Activated B cell treated with CpG ODN at 0.5 μM for 24 hours (primary cell): ENCODE measurements at regions of chr17 and their contacts with region 1.

Region 1: GRCh38 chr17:64025732-64026294 is 5.4 kb upstream of the ICAM2 start:
- DNase-seq: peak; percentile 72
- ATAC-seq: peak; percentile 92
- H3K4me3 Mint-ChIP-seq: peak overlapping the region; percentile 73
- H3K27ac Mint-ChIP-seq: peak overlapping the region; percentile 62
- H3K4me1 Mint-ChIP-seq: peaks cover 42% of the 10 kb centered on the region
- H3K27me3 Mint-ChIP-seq: no peaks in the 10 kb centered on the region
- CTCF ChIP-seq: peak; percentile 80

Region 2: GRCh38 chr17:63911657-63912426 is 114.0 kb before region 1 on chr17:
- CTCF ChIA-PET with region 1: interaction called, 102 read pairs
- POLR2A ChIA-PET with region 1: interaction called, 13 read pairs
- intact Hi-C with region 1: loop called (anchors 1 kb)
- DNase-seq: peak; percentile 59
- ATAC-seq: peak; percentile 57
- H3K4me3 Mint-ChIP-seq: no peak overlapping the region
- H3K27ac Mint-ChIP-seq: peak overlapping the region; percentile 35
- H3K4me1 Mint-ChIP-seq: peaks cover 52% of the 10 kb centered on the region
- H3K27me3 Mint-ChIP-seq: peaks cover 1% of the 10 kb centered on the region
- CTCF ChIP-seq: no peak

Region 3: DNA sequence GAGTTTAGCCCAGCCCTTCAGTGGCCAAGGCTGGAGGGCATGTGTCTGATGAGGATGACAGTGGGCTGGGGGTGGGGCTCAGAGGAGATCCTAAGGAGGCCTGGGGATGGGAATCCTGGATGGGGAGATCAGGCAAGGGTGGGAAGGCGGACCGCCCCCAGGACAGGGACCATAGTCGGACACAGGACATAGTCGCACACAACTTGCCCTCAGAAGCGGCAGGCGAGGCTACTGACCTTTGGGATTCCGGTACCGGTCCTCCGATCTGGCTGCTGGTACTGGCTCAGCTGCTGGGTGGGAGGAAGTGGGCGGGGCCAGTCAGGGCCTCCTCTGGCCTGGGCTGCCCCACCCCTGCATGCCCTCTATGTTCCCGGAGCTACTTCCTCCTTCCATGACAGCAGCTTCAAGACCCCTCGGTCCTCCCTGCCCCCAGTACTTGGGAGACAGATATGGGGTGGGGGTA is 94.7 kb before region 1 on chr17:
- CTCF ChIA-PET with region 1: interaction called, 11 read pairs
- POLR2A ChIA-PET with region 1: interaction called, 48 read pairs
- intact Hi-C with region 1: no loop called
- DNase-seq: peak; percentile 67
- ATAC-seq: peak; percentile 45
- H3K4me3 Mint-ChIP-seq: peak overlapping the region; percentile 98
- H3K27ac Mint-ChIP-seq: peak overlapping the region; percentile 96
- H3K4me1 Mint-ChIP-seq: peaks cover 89% of the 10 kb centered on the region
- H3K27me3 Mint-ChIP-seq: no peaks in the 10 kb centered on the region
- CTCF ChIP-seq: no peak

Region 4: GRCh38 chr17:63984651-63985386 is 41.0 kb before region 1 on chr17:
- CTCF ChIA-PET with region 1: interaction called, 21 read pairs
- POLR2A ChIA-PET with region 1: interaction called, 12 read pairs
- intact Hi-C with region 1: loop called (anchors 1 kb)
- DNase-seq: no peak
- ATAC-seq: peak; percentile 89
- H3K4me3 Mint-ChIP-seq: no peak overlapping the region
- H3K27ac Mint-ChIP-seq: no peak overlapping the region
- H3K4me1 Mint-ChIP-seq: peaks cover 16% of the 10 kb centered on the region
- H3K27me3 Mint-ChIP-seq: no peaks in the 10 kb centered on the region
- CTCF ChIP-seq: no peak

Region 5: DNA sequence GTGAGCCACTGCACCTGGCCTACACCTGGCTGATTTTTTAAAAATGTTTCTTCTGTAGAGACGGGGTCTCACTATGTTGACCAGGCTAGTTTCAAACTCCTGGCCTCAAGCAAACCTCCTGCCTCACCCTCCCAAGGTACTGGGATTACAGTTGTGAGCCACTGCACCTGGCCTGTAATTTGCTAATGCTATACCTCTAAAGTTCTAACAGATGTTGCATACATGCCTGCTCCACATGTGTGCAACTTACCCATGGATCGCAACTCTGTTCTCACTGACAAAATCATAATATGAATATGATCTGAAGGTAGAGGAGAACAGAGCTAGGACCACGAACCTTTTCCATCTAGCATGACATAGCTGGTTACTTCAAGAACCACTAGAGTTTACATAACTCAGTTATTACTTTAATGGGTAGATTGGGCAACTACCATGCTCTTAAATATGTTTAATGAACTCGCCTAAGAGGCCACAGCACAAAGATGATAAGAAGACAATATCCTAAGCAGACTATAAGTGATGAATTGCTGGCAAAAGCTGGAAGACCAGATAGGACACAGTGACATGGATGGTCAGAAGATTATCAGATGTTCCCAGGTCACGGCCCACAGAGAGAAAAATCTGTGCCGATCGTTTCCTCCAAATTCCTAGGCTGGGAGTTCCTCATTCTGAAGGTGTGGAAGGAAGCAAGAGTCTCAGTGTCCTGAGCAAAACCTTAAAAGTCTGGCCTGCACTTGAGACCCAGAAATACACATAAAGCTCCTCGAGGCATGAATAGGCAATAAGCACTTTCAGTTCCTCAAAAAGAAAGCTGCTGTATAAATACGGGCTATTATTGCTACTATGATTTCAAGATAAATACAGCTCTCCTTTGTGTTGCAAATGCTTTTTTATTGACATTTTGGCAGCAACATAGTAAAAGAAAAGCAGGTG is 48.2 kb after region 1 on chr17:
- CTCF ChIA-PET with region 1: interaction called, 10 read pairs
- POLR2A ChIA-PET with region 1: interaction called, 3 read pairs
- intact Hi-C with region 1: loop called (anchors 5 kb)
- DNase-seq: no peak
- ATAC-seq: peak; percentile 90
- H3K4me3 Mint-ChIP-seq: no peak overlapping the region
- H3K27ac Mint-ChIP-seq: peak overlapping the region; percentile 64
- H3K4me1 Mint-ChIP-seq: peaks cover 32% of the 10 kb centered on the region
- H3K27me3 Mint-ChIP-seq: no peaks in the 10 kb centered on the region
- CTCF ChIP-seq: no peak

Region 6: DNA sequence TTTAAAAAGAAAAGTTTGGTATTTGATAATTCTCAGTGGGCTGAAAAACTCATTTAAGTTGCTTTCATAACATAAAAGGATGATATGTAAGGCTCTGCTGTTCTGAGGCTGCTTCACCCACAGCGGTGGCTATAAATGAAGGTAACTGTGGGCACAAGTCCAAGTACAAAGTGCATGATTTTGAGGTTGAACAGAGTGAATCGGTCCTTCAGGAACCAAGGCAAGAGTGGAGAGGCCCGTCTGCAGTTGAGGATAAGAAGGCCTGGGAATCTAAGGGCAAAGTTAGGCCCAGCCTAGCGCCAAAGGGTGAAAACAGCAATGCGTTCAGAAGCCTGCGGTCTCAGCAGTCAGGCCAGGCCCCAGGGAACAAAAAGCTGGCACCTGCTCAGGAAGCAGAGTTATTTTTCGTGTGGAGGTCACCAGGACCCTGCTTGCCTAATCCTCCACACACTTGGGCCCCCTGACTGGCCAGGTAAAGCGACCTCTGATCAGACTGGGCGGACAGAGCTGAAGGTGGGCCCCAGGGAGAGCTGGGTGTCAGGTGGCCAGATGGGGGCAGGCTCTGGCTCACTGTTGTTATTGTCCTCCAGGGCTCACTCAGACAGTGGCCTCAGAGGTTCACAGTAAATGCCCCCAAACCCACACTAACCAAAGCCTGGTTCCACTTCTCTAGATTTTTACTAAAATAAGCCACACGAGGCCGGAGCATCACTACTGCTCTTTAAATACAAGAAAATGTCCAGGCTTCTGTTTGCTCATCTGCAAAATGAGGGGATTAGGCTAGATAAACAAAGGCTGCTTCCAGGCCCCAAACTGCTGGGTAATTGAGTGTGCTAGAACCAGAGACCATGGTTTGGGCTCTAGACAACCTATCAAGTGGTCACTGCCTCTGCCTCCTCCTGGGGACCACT is 190.8 kb after region 1 on chr17:
- CTCF ChIA-PET with region 1: no interaction called
- POLR2A ChIA-PET with region 1: no interaction called
- intact Hi-C with region 1: loop called (anchors 5 kb)
- DNase-seq: peak; percentile 17
- ATAC-seq: peak; percentile 63
- H3K4me3 Mint-ChIP-seq: peak overlapping the region; percentile 32
- H3K27ac Mint-ChIP-seq: peak overlapping the region; percentile 76
- H3K4me1 Mint-ChIP-seq: peaks cover 31% of the 10 kb centered on the region
- H3K27me3 Mint-ChIP-seq: no peaks in the 10 kb centered on the region
- CTCF ChIP-seq: no peak